ENCODE measurements at regions of chr14 and their contacts with region 1.

Region 1: DNA sequence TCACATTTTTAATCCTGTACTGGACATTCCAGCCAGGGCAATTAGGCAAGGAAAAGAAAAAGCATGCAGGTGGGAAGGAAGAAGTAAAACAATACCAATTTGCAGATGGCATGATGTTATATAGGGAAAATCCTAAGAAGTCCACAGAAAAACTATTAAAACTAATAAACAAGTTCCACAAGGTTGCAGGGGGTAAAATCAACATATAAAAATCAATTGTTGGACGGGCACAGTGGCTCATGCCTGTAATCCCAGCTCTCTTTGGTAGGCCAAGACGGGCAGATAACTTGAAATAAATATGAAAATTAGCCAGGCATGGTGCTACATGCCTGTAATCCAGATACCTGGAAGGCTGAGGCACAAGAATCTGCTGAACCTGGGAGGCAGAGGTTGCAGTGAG is 31.9 kb downstream of the SEC23A start:
- DNase-seq: no peak
- ATAC-seq: no peak
- H3K4me3 ChIP-seq: no peak overlapping the region
- H3K27ac ChIP-seq: no peak overlapping the region
- H3K4me1 ChIP-seq: no peaks in the 10 kb centered on the region
- H3K27me3 ChIP-seq: no peaks in the 10 kb centered on the region
- CTCF ChIP-seq: no peak
- POLR2A ChIP-seq: no peak
- RAD21 ChIP-seq: no peak

Region 2: GRCh38 chr14:38770251-38770650 is 300.8 kb before region 1 on chr14:
- CTCF ChIA-PET with region 1: no interaction called
- POLR2A ChIA-PET with region 1: no interaction called
- dilution Hi-C with region 1: no loop called
- in situ Hi-C with region 1: no loop called
- intact Hi-C with region 1: no loop called
- DNase-seq: no peak
- ATAC-seq: no peak
- H3K4me3 ChIP-seq: no peak overlapping the region
- H3K27ac ChIP-seq: no peak overlapping the region
- H3K4me1 ChIP-seq: no peaks in the 10 kb centered on the region
- H3K27me3 ChIP-seq: no peaks in the 10 kb centered on the region
- CTCF ChIP-seq: no peak
- POLR2A ChIP-seq: no peak
- RAD21 ChIP-seq: no peak

Region 3: GRCh38 chr14:39034481-39035296 is 36.4 kb before region 1 on chr14:
- CTCF ChIA-PET with region 1: no interaction called
- POLR2A ChIA-PET with region 1: no interaction called
- dilution Hi-C with region 1: no loop called
- in situ Hi-C with region 1: no loop called
- intact Hi-C with region 1: loop called (anchors 5 kb)
- DNase-seq: no peak
- ATAC-seq: peak; percentile 46
- H3K4me3 ChIP-seq: no peak overlapping the region
- H3K27ac ChIP-seq: no peak overlapping the region
- H3K4me1 ChIP-seq: no peaks in the 10 kb centered on the region
- H3K27me3 ChIP-seq: no peaks in the 10 kb centered on the region
- CTCF ChIP-seq: 0 out of 2 replicates have a peak, but pooled peaks have one; percentile 16
- POLR2A ChIP-seq: no peak
- RAD21 ChIP-seq: no peak

Measured in IMR-90 (cell line).